ENCODE measurements at regions of chr14 and their contacts with region 1.

Region 1: GRCh38 chr14:99480917-99481744 is at the start of gene CCNK:
- H3K4me3 Mint-ChIP-seq: peak within 1 kb of the TSS; percentile 94
- H3K27ac Mint-ChIP-seq: peak within 1 kb of the TSS; percentile 98
- H3K4me1 Mint-ChIP-seq: peaks cover 47% of the 10 kb centered on the region
- H3K27me3 Mint-ChIP-seq: no peaks in the 10 kb centered on the region

Region 2: GRCh38 chr14:99683619-99684355 is 202.7 kb after region 1 on chr14 and contains the start of gene CYP46A1:
- intact Hi-C with region 1: loop called (anchors 2 kb)
- H3K4me3 Mint-ChIP-seq: peak within 1 kb of the TSS; percentile 89
- H3K27ac Mint-ChIP-seq: peak within 1 kb of the TSS; percentile 83
- H3K4me1 Mint-ChIP-seq: peaks cover 18% of the 10 kb centered on the region
- H3K27me3 Mint-ChIP-seq: peaks cover 63% of the 10 kb centered on the region